GM10248 (cell line): ENCODE measurements at regions of chr1 and their contacts with region 1.

Region 1: GRCh38 chr1:36385410-36386257 is at the start of gene STK40:
- DNase-seq: peak; percentile 96
- CTCF ChIP-seq: no peak

Region 2: DNA sequence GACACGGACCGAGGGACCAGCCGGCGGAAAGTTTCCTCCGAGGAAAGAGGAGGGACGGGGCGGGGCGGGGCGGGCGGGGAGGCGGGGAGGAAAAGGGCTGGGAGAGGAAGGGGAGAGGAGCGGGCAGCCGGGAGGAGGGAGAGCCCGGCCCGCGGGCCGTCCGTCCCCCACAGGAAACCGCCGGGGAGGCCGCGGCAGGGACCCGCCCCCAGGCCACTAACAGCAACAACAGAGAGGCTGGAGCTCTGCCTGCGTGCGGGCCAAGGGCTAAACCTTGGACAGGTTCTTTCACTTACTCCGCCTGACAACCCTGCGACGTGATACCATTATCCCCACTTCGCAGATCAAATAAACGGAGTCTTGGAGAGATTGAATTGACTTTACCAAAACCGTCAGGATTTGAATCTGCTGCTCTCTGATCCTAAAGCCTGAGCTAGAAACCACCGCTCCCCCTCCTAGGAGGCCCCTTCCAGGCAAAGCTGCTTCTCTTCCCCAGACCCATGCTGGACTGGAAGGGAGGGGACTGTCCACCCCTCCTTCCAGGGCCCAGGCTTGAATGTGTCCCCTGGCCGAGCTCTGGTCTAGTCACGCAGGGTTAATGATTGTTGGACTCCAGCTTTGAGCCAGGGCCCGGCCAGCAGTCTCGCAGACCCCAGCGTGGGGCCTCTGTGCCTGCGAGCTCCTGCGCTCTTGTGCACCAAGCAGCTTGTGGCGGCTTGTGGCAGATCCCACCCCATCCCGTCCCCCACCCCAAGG is 61.9 kb before region 1 on chr1 and contains the start of gene EVA1B:
- CTCF ChIA-PET with region 1: interaction called, 10 read pairs
- POLR2A ChIA-PET with region 1: no interaction called
- DNase-seq: peak; percentile 79
- CTCF ChIP-seq: no peak

Region 3: GRCh38 chr1:36369061-36369861 is 16.4 kb before region 1 on chr1:
- CTCF ChIA-PET with region 1: interaction called, 25 read pairs
- POLR2A ChIA-PET with region 1: interaction called, 8 read pairs
- DNase-seq: peak; percentile 85
- CTCF ChIP-seq: peak; percentile 91

Region 4: GRCh38 chr1:36397378-36398230 is 12.0 kb after region 1 on chr1 and contains the start of gene LSM10:
- CTCF ChIA-PET with region 1: interaction called, 11 read pairs
- POLR2A ChIA-PET with region 1: interaction called, 15 read pairs
- DNase-seq: peak; percentile 93
- CTCF ChIP-seq: no peak